ENCODE measurements at regions of chr1 and their contacts with region 1.

Region 1: GRCh38 chr1:200720199-200720598 is 18.5 kb upstream of the CAMSAP2 start:
- DNase-seq: no peak
- ATAC-seq: no peak
- H3K4me3 ChIP-seq: no peak overlapping the region
- H3K27ac ChIP-seq: no peak overlapping the region
- H3K4me1 ChIP-seq: no peaks in the 10 kb centered on the region
- H3K27me3 ChIP-seq: no peaks in the 10 kb centered on the region
- CTCF ChIP-seq: no peak
- EP300 ChIP-seq: no peak
- POLR2A ChIP-seq: no peak
- RAD21 ChIP-seq: no peak

Region 2: DNA sequence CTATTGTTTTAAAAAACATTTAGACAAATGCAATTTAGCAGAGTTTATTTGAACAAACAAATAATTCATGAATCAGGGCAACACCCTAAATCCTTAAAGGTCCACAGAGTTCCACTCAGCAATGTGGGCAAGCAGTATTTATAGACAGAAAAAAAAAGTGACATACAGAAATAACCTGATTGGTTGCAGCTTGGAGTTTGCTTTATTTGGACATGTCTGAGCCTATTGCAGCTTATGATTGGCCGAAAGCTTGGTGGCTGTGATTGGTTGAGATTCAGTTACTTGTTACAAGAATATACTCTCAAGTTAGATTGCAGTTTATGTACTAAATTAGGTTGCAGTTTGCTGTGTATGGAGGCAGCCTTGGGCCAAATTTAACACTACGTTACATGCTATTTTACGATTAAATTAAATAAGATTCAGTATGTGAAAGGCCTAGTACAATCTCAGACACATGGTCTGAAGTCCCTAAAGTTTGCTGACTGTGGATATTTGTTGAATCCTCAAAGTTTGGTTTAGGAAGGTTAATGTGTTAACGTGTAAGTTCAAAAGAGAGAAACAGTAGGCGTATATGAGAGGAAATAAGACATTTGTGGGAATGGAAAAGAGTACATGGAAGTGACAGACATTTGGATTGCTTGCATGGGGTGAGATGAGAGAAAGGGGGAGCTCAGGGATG is 11.6 kb after region 1 on chr1:
- CTCF ChIA-PET with region 1: no interaction called
- POLR2A ChIA-PET with region 1: interaction called, 10 read pairs
- in situ Hi-C with region 1: no loop called
- intact Hi-C with region 1: no loop called
- DNase-seq: peak in 1 of 4 experiments; percentile 32
- ATAC-seq: peak; percentile 74
- H3K4me3 ChIP-seq: no peak overlapping the region
- H3K27ac ChIP-seq: no peak overlapping the region
- H3K4me1 ChIP-seq: no peaks in the 10 kb centered on the region
- H3K27me3 ChIP-seq: no peaks in the 10 kb centered on the region
- CTCF ChIP-seq: no peak
- EP300 ChIP-seq: no peak
- POLR2A ChIP-seq: no peak
- RAD21 ChIP-seq: no peak